ENCODE measurements at regions of chr3 and their contacts with region 1.

Region 1: DNA sequence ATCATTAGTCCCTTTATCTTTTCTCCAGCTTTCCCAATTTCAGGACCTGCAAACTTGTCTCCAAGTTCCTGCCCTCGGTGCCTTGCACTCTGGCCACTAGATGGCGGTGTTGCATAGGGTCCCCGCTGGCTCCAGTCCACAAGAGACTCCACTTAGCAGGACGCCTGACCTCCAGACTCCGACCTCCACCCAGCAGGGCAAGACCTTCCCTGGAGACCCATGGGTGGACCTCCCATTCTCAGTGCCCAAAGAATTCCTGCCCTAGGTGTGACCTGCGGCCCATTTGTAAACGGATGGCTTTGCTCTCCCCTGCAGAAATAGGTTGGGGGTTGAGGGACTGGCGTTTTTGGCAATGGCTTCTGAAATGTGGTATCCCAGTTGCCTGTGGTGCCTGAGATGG is 82.6 kb downstream of the LSM3 start:
- DNase-seq: peak; percentile 86
- H3K4me3 Mint-ChIP-seq: no peak overlapping the region
- H3K27ac Mint-ChIP-seq: no peak overlapping the region
- H3K4me1 Mint-ChIP-seq: no peaks in the 10 kb centered on the region
- H3K27me3 Mint-ChIP-seq: no peaks in the 10 kb centered on the region

Region 2: GRCh38 chr3:14203521-14204079 is 57.6 kb before region 1 on chr3:
- CTCF ChIA-PET with region 1: interaction called, 4 read pairs
- intact Hi-C with region 1: loop called (anchors 2 kb)
- DNase-seq: peak; percentile 64
- H3K4me3 Mint-ChIP-seq: no peak overlapping the region
- H3K27ac Mint-ChIP-seq: no peak overlapping the region
- H3K4me1 Mint-ChIP-seq: peaks cover 2% of the 10 kb centered on the region
- H3K27me3 Mint-ChIP-seq: no peaks in the 10 kb centered on the region

Region 3: GRCh38 chr3:14388201-14388600 is 127.0 kb after region 1 on chr3:
- CTCF ChIA-PET with region 1: no interaction called
- intact Hi-C with region 1: loop called (anchors 10 kb)
- DNase-seq: no peak
- H3K4me3 Mint-ChIP-seq: no peak overlapping the region
- H3K27ac Mint-ChIP-seq: no peak overlapping the region
- H3K4me1 Mint-ChIP-seq: no peaks in the 10 kb centered on the region
- H3K27me3 Mint-ChIP-seq: no peaks in the 10 kb centered on the region

Region 4: GRCh38 chr3:14461748-14462324 is 200.6 kb after region 1 on chr3:
- CTCF ChIA-PET with region 1: interaction called, 15 read pairs
- intact Hi-C with region 1: loop called (anchors 1 kb)
- DNase-seq: peak; percentile 77
- H3K4me3 Mint-ChIP-seq: no peak overlapping the region
- H3K27ac Mint-ChIP-seq: peak overlapping the region; percentile 59
- H3K4me1 Mint-ChIP-seq: peaks cover 36% of the 10 kb centered on the region
- H3K27me3 Mint-ChIP-seq: no peaks in the 10 kb centered on the region

Region 5: GRCh38 chr3:14467814-14468620 is 206.8 kb after region 1 on chr3:
- CTCF ChIA-PET with region 1: interaction called, 15 read pairs
- intact Hi-C with region 1: loop called (anchors 1 kb)
- DNase-seq: peak; percentile 47
- H3K4me3 Mint-ChIP-seq: no peak overlapping the region
- H3K27ac Mint-ChIP-seq: peak overlapping the region; percentile 30
- H3K4me1 Mint-ChIP-seq: peaks cover under 1% of the 10 kb centered on the region
- H3K27me3 Mint-ChIP-seq: no peaks in the 10 kb centered on the region

Region 6: GRCh38 chr3:14548321-14548729 is 287.1 kb after region 1 on chr3:
- CTCF ChIA-PET with region 1: no interaction called
- intact Hi-C with region 1: loop called (anchors 1 kb)
- DNase-seq: peak; percentile 57
- H3K4me3 Mint-ChIP-seq: no peak overlapping the region
- H3K27ac Mint-ChIP-seq: no peak overlapping the region
- H3K4me1 Mint-ChIP-seq: no peaks in the 10 kb centered on the region
- H3K27me3 Mint-ChIP-seq: peaks cover 31% of the 10 kb centered on the region